GM18951 (cell line): ENCODE measurements at regions of chr12 and their contacts with region 1.

Region 1: DNA sequence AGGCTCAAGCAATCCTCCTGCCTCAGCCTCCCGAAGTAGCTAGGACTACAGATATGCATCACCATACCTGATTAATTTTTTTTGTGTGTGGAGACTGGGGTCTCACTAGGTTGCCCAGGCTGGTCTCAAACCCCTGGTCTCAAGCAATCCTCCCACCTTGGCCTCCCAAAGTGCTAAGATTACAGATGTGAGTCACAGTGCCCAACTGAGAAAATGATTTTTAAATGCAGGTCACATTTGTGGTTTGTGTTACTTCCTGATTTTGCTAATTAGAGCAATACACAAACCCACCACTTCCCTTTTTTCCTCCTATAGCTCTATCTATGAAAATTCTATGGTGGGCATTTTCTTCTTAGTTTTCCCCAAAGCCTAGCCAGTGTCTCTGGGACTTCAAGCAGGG is 45.5 kb upstream of the TMEM263 start:
- POLR2A ChIP-seq: no peak

Region 2: GRCh38 chr12:106378788-106379187 is 531.4 kb before region 1 on chr12:
- in situ Hi-C with region 1: loop called (anchors 5 kb)
- POLR2A ChIP-seq: no peak